ENCODE measurements at regions of chr9 and their contacts with region 1.

Region 1: DNA sequence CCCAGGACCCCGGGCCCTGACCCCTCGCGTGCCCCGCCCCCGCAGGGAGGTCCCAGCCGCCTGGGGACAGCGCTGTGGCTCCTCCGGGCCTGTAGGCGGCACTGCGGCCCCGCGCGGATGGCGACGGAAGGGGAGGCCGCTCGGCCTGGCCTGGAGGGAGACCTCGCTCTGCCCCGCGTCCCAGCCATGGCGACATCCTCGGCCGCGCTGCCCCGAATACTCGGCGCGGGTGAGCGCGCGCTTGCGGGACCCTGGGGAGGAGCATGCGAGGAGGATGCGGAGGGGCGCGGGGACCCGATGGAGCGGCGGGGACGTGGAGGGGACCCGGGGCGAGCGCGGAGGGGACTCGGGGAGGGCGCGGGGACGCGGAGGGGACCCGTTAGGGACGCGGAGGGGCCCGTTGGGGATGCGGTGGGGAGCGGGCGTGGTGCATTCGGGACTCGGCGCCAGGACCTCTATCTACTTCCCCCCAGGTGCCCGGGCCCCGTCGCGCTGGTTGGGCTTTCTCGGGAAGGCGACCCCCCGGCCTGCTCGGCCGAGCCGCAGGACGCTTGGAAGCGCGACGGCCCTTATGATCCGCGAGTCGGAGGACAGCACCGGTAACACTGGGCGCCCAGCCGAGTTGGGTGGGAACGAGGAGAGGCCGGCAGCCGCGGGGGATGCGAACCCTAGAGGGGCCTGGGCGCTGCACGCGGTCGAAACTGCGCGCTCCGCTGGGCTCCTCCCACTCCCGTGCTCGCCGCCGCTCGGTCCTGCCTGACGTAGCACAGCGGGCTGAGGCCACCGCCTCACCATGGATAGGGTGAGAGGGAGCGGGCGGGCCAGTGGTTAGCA is at the start of gene MRPS2:
- DNase-seq: peak; percentile 84
- H3K4me3 ChIP-seq: peak within 1 kb of the TSS; percentile 58 to 92 (median 72)
- H3K27ac ChIP-seq: peak within 1 kb of the TSS; percentile 54
- H3K4me1 ChIP-seq: peaks cover 14% of the 10 kb centered on the region
- H3K27me3 ChIP-seq: no peaks in the 10 kb centered on the region
- CTCF ChIP-seq: peak; percentile 87 to 90
- POLR2A ChIP-seq: peak; percentile 36
- total RNA-seq, gene MRPS2: 48.0 and 50.8 TPM in 2 replicates

Region 2: DNA sequence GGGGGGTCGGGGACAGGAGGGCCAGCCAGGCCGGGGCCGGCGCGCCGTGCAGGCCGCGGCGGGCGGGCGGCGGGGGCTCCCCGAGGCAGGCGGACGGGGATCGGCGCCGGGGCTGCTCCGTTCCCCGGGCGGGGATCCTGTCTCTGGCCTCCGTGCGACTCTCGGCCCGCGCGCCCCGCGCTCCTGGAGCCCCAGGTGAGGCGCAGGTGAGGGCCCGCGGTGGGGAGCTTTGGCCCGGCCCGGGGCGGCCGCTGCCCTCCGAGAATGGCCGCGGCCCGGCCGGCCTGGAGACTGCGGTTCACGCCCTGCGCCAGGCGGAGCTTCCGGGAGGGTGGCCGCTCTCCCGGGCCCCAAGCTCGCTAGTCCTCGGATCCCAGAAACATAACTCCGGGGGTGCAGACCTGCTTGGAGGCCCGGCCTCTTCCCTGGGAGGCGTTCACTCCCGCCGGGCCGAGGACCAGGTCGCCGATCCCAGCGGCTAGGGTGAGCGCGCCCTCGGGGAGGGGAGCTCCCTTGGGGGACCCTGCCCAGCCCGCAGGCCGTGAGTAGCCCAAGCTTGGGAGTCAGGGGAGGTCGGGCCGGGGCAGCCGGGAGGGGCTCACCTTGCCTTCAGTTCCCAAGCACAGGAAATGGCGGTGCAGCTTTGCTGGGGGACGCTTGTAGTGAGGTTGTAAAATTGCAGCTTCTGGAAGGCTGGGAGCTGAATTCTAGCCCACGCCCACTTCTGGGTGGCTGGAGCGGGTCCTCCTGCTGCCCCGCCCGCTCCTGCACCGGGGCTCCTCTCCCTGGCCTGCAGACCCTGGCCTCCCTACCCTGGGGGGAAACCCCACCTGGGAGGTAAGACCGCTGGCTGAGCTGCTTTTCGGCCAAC is 20.4 kb before region 1 on chr9:
- CTCF ChIA-PET with region 1: interaction called, 11 read pairs
- POLR2A ChIA-PET with region 1: no interaction called
- dilution Hi-C with region 1: no loop called
- intact Hi-C with region 1: loop called (anchors 1 kb)
- DNase-seq: peak; percentile 26
- H3K4me3 ChIP-seq: peak overlapping the region; percentile 15 to 78 (median 28)
- H3K27ac ChIP-seq: no peak overlapping the region
- H3K4me1 ChIP-seq: peaks cover 7% of the 10 kb centered on the region
- H3K27me3 ChIP-seq: no peaks in the 10 kb centered on the region
- CTCF ChIP-seq: no peak
- POLR2A ChIP-seq: no peak

Region 3: DNA sequence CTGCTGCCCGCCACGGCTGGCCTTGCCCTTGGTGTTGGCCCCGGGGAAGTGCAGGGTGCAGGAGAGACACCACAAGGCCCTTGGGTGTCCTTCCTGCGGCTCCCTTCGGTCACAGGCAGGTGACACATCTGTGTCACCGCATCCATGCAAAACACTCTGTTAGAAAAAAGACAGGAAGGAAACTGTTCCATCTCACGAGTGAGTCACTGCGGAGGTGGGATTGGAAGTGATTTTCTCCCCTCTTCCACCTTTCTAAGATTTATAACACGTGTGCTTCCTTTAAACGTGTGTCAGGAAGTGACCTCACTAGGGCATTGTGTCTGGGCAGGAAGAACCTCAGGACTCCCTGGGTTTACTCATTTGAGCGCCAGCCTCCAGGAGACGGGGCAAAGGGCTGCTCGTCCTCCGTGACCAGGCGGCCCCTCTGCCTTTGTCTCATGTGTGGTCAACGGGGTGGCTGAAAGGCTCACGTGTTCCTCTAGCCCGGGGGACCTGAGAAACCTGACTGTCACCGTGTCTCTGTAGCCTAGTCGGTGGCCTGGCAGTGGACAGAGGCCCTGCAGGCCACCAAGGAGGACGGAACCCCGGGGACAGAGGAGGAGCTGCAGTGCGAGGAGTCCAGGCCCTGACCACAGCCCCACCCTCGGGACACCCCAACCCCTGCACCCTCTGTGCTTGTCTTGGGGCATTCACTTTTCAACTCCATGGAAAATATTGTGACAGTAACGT is 15.6 kb after region 1 on chr9:
- CTCF ChIA-PET with region 1: interaction called, 7 read pairs
- POLR2A ChIA-PET with region 1: no interaction called
- dilution Hi-C with region 1: no loop called
- intact Hi-C with region 1: loop called (anchors 1 kb)
- DNase-seq: peak; percentile 54
- H3K4me3 ChIP-seq: no peak overlapping the region
- H3K27ac ChIP-seq: peak overlapping the region; percentile 79
- H3K4me1 ChIP-seq: peaks cover 9% of the 10 kb centered on the region
- H3K27me3 ChIP-seq: no peaks in the 10 kb centered on the region
- CTCF ChIP-seq: no peak
- POLR2A ChIP-seq: no peak

Measured in endothelial cell of umbilical vein (primary cell).